ENCODE measurements at regions of chr6 and their contacts with region 1.

Region 1: GRCh38 chr6:62516291-62517141 is 230.5 kb upstream of the KHDRBS2 start:
- DNase-seq: peak; percentile 75
- H3K4me3 ChIP-seq: peak overlapping the region; percentile 53
- H3K27ac ChIP-seq: peak overlapping the region; percentile 19
- H3K4me1 ChIP-seq: peaks cover 18% of the 10 kb centered on the region
- CTCF ChIP-seq: no peak

Region 2: DNA sequence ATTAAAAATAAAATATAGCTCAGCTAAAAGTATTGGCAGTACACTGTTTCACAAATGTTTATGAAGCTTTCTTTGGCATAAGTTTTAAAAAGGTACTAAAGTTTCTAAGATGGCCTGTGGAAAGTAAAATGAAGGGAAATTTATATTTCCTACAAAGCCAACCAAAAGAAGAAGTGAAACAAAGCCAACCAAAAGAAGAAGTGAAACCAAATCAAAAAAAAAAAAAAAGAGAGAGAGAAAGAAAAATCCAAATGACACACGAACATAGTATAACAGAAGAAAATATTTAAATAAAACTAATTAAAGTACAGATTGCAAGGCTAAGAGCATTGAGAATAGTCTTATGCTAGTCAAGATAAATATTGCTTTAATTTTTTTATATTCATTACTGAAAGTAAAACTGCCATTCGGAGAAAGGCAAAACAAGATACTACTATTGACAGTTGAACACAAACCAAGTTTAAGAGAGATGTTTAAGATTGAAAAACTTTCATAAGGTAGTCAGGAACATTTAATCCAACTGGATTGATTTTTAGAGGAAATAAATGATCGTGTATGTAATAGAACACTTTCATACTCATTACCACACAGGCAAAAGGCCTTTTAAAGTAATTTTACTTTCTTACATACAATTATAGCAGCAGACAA is 217.6 kb before region 1 on chr6:
- CTCF ChIA-PET with region 1: no interaction called
- POLR2A ChIA-PET with region 1: interaction called, 3 read pairs
- intact Hi-C with region 1: loop called (anchors 5 kb)
- DNase-seq: peak; percentile 74
- H3K4me3 ChIP-seq: peak overlapping the region; percentile 36
- H3K27ac ChIP-seq: peak overlapping the region; percentile 70
- H3K4me1 ChIP-seq: peaks cover 34% of the 10 kb centered on the region
- CTCF ChIP-seq: no peak

Measured in OCI-LY7 (cell line).